ENCODE measurements at regions of chr19 and their contacts with region 1.

Region 1: DNA sequence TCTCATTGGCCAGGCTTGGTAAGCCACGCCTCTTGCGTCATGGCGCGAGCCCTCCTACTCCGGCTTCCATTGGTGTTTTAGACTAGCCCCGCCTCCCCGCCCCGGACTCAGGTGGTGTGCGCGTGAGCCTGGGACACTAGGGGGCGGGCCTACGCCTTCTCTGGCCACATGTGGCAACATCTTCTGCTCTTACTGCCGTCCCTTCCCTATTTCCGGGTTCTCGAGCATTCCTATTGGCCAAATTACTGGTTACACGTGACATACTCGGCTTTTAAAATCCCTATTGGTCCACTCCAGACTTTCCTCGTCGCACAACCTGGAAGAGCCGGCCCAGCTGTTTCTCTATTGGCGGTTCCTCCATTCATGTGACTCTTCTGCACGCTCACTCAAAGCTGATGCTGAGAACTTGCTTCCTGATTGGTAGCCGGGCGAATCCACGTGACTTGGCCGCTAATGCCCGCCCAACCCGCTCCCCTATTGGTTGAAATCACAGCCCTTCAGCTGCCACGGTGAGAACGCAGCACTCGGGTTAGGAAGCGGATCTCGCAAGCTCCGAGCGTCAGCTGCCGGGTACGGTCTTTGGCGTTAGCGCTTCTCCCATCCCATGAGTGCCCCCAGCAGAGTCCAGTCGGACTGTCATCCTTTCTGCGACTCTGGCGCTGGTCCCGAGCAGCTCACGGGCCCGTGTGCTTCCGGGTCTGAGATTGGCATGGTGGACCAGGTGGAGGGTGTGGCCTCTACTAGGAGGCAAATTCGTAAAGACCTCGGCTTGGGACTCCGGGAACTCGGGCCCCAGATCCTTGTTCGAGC is at the start of gene BLOC1S3:
- DNase-seq: peak; percentile 100
- ATAC-seq: peak; percentile 97 to 99 (median 98)
- H3K4me3 ChIP-seq: peak within 1 kb of the TSS; percentile 54 to 95 (median 84)
- H3K27ac ChIP-seq: peak within 1 kb of the TSS; percentile 14 to 97 (median 88)
- H3K4me1 ChIP-seq: peaks cover 0 to 41% (median 26%) of the 10 kb centered on the region in 12 donors
- H3K27me3 ChIP-seq: no peaks in the 10 kb centered on the region
- CTCF ChIP-seq: peak; percentile 24 to 74 (median 53)
- POLR2A ChIP-seq: peak; percentile 45 to 92
- total RNA-seq, gene BLOC1S3: 2.9 to 8.1 (median 4.8) TPM

Region 2: GRCh38 chr19:45059278-45059965 is 119.0 kb before region 1 on chr19:
- intact Hi-C with region 1: no loop called
- DNase-seq: peak; percentile 60 to 81 (median 67)
- ATAC-seq: peak; percentile 45 to 78 (median 69)
- H3K4me3 ChIP-seq: no peak overlapping the region
- H3K27ac ChIP-seq: no peak overlapping the region
- H3K4me1 ChIP-seq: no peaks in the 10 kb centered on the region
- H3K27me3 ChIP-seq: no peaks in the 10 kb centered on the region
- CTCF ChIP-seq: peak; percentile 69 to 91 (median 83)
- POLR2A ChIP-seq: no peak

Region 3: DNA sequence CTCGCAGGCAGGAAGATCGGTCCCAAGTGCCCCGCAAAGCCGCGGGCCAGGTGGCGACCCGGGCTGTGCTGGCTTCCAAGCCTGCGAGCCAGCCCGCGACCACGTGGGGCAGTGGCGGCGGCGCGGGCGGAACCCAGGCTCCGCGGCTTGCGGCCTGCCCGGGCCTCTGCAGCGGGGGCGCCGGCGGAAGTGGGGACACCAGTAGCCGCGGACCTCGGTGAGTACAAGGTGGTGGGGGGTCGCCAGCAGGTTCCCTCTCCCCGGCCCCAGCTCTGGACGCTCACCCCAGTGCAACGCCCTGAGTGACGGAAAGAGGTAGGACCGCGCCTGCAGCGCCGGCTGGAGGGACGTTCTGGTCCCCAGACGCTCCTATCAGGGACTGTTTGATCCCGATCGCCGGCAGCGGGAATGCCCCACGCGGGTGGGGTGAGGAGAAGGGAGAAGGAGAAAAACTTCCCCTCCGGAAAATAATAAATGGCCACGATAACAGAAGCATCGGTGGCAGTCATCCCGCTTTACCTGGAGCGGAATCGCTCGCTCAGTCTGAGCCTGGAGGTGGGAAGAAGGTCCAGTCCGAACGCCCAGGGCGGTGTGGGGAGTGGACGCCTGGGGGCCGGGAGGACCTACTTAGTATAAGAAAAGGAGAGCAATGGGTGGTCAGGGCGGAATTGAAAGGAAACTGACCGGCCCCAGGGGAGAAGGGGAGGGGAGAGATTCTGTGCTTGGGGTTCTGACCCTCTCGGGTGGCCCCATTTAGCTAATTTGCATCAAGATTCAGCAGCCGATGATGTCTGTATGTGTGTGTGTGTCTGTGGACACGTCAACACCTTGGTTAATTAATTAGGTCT is 99.2 kb before region 1 on chr19 and contains the start of gene GEMIN7:
- intact Hi-C with region 1: loop called in 1 of 10 experiments (anchors 5 kb)
- DNase-seq: peak; percentile 73 to 86 (median 81)
- ATAC-seq: peak; percentile 77 to 89 (median 87)
- H3K4me3 ChIP-seq: peak within 1 kb of the TSS; percentile 81 to 100 (median 94)
- H3K27ac ChIP-seq: peak within 1 kb of the TSS; percentile 60 to 87 (median 74)
- H3K4me1 ChIP-seq: peaks cover 6 to 47% (median 28%) of the 10 kb centered on the region in 12 donors
- H3K27me3 ChIP-seq: no peaks in the 10 kb centered on the region
- CTCF ChIP-seq: peak in 3 of 12 donors; percentile 12 to 21 (median 16)
- POLR2A ChIP-seq: peak in 1 of 2 donors; percentile 63
- total RNA-seq, gene GEMIN7: 11.4 to 22.0 (median 17.0) TPM

Region 4: GRCh38 chr19:45125926-45126493 is 52.5 kb before region 1 on chr19:
- intact Hi-C with region 1: loop called in 1 of 10 experiments (anchors 5 kb)
- DNase-seq: peak in 4 of 5 donors; percentile 37 to 66 (median 44)
- ATAC-seq: peak; percentile 38 to 79 (median 70)
- H3K4me3 ChIP-seq: no peak overlapping the region
- H3K27ac ChIP-seq: no peak overlapping the region
- H3K4me1 ChIP-seq: peaks cover 0 to 7% (median 0%) of the 10 kb centered on the region in 12 donors
- H3K27me3 ChIP-seq: no peaks in the 10 kb centered on the region
- CTCF ChIP-seq: peak; percentile 48 to 73 (median 57)
- POLR2A ChIP-seq: no peak

Measured in heart left ventricle (tissue), 16 donors.